ENCODE measurements at regions of chr9 and their contacts with region 1.

Region 1: DNA sequence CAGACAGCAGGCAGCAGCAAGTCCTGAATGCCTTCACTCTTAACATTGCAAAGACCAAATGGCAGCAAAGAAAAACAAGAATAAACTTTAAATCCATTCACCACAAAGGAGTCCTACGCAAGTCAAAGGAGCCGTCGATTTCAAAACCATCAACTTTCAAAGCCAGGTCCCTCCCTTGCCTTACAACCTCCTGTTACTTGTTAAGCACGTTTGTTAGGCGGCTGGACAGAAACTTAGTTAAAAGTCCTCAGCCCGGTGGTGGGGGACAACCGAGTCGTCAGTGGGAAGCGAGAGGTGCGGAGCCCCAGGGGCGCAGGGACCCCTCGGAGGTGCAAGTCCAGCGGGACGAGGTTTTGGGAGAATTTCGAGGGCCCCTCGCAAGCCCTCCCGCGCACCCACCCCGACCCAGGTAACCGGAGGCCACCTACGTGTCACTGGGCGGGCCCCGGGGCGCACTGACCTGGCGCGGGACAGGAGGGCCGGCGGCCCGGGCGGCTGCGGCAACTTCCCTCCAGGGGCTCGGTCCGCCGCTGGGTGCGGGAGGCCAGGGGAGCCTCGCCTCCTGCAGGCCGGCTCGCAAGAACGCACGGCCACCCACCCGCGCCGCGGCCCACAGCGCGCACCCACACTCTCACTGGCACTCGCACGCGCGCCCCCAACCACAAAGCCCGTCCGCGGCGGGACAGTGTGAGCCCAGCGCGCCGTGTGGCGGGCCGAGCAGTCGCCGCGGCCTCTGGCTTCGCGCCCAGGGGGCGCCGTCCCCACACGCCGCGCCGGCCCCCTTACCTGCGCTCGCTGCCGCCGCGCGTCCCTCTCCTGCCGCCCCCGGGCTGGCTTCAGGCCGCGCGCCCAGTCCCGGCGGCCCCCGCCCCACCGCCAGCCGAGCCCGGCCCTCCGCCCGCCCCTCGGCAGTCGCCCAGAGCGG is 627 bp downstream of the LPAR1 start:
- DNase-seq: peak; percentile 71
- H3K4me3 ChIP-seq: peak overlapping the region; percentile 95
- H3K27ac ChIP-seq: peak overlapping the region; percentile 81
- H3K4me1 ChIP-seq: peaks cover 29% of the 10 kb centered on the region
- H3K27me3 ChIP-seq: no peaks in the 10 kb centered on the region

Region 2: DNA sequence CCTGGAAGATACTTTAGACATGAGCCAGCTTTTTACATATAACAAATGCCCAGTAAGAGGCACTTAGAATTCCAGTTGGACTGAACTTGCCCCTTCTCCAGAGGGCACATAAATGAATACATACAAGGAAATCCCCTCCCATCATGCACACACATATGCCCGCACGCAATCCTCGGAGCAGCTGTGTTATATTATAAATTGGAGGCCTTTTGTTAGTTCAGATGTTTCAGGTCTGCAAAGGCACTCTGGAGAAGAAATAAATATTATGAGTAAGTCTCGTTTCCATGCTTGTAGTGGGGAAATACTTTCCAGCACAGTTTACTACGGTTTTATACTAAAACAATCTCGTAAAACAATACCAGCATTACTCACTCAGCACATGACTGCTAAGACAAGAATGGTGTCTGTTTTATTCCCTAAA is 386.6 kb before region 1 on chr9:
- in situ Hi-C with region 1: loop called (anchors 10 kb)
- DNase-seq: peak; percentile 96
- H3K4me3 ChIP-seq: peak overlapping the region; percentile 23
- H3K27ac ChIP-seq: peak overlapping the region; percentile 94
- H3K4me1 ChIP-seq: peaks cover 37% of the 10 kb centered on the region
- H3K27me3 ChIP-seq: no peaks in the 10 kb centered on the region

Measured in GM23248 (cell line).